GM12878 (cell line): ENCODE measurements at regions of chr4 and their contacts with region 1.

Region 1: GRCh38 chr4:25439918-25440477 is 62.9 kb downstream of the ANAPC4 start:
- DNase-seq: peak; percentile 11
- ATAC-seq: peak; percentile 97
- H3K4me3 ChIP-seq: no peak overlapping the region
- H3K27ac ChIP-seq: no peak overlapping the region
- H3K4me1 ChIP-seq: no peaks in the 10 kb centered on the region
- H3K27me3 ChIP-seq: no peaks in the 10 kb centered on the region; a peak in 1 of 4 replicates
- CTCF ChIP-seq: peak; percentile 85 to 90 (median 89)
- EP300 ChIP-seq: no peak
- POLR2A ChIP-seq: no peak
- RAD21 ChIP-seq: peak; percentile 75

Region 2: GRCh38 chr4:23877758-23878229 is 1562.2 kb before region 1 on chr4:
- CTCF ChIA-PET with region 1: no interaction called
- POLR2A ChIA-PET with region 1: no interaction called
- RAD21 ChIA-PET with region 1: no interaction called
- SMC1A ChIA-PET with region 1: no interaction called
- in situ Hi-C with region 1: no loop called
- intact Hi-C with region 1: no loop called
- DNase-seq: no peak
- ATAC-seq: no peak
- H3K4me3 ChIP-seq: no peak overlapping the region
- H3K27ac ChIP-seq: no peak overlapping the region
- H3K4me1 ChIP-seq: no peaks in the 10 kb centered on the region
- H3K27me3 ChIP-seq: no peaks in the 10 kb centered on the region
- CTCF ChIP-seq: no peak
- EP300 ChIP-seq: no peak
- POLR2A ChIP-seq: no peak
- RAD21 ChIP-seq: no peak

Region 3: GRCh38 chr4:25621027-25621930 is 181.3 kb after region 1 on chr4:
- CTCF ChIA-PET with region 1: no interaction called
- POLR2A ChIA-PET with region 1: no interaction called
- RAD21 ChIA-PET with region 1: no interaction called
- SMC1A ChIA-PET with region 1: interaction called, 3 read pairs
- in situ Hi-C with region 1: no loop called
- intact Hi-C with region 1: loop called (anchors 10 kb)
- DNase-seq: no peak
- ATAC-seq: no peak
- H3K4me3 ChIP-seq: no peak overlapping the region
- H3K27ac ChIP-seq: no peak overlapping the region
- H3K4me1 ChIP-seq: no peaks in the 10 kb centered on the region
- H3K27me3 ChIP-seq: no peaks in the 10 kb centered on the region; a peak in 1 of 4 replicates
- CTCF ChIP-seq: no peak
- EP300 ChIP-seq: no peak
- POLR2A ChIP-seq: no peak
- RAD21 ChIP-seq: no peak

Region 4: GRCh38 chr4:25767877-25768725 is 328.1 kb after region 1 on chr4:
- CTCF ChIA-PET with region 1: interaction called, 104 read pairs
- POLR2A ChIA-PET with region 1: no interaction called
- RAD21 ChIA-PET with region 1: interaction called, 22 read pairs
- SMC1A ChIA-PET with region 1: interaction called, 35 read pairs
- in situ Hi-C with region 1: no loop called
- intact Hi-C with region 1: loop called (anchors 1 kb)
- DNase-seq: no peak
- ATAC-seq: peak; percentile 88
- H3K4me3 ChIP-seq: no peak overlapping the region
- H3K27ac ChIP-seq: no peak overlapping the region
- H3K4me1 ChIP-seq: no peaks in the 10 kb centered on the region
- H3K27me3 ChIP-seq: no peaks in the 10 kb centered on the region
- CTCF ChIP-seq: peak; percentile 78 to 88 (median 86)
- EP300 ChIP-seq: no peak
- POLR2A ChIP-seq: no peak
- RAD21 ChIP-seq: peak; percentile 79

Region 5: GRCh38 chr4:25779016-25779415 is 339.0 kb after region 1 on chr4:
- CTCF ChIA-PET with region 1: interaction called, 4 read pairs
- POLR2A ChIA-PET with region 1: no interaction called
- RAD21 ChIA-PET with region 1: no interaction called
- SMC1A ChIA-PET with region 1: no interaction called
- in situ Hi-C with region 1: loop called (anchors 5 kb)
- intact Hi-C with region 1: no loop called
- DNase-seq: no peak
- ATAC-seq: no peak
- H3K4me3 ChIP-seq: no peak overlapping the region
- H3K27ac ChIP-seq: no peak overlapping the region
- H3K4me1 ChIP-seq: no peaks in the 10 kb centered on the region
- H3K27me3 ChIP-seq: no peaks in the 10 kb centered on the region
- CTCF ChIP-seq: no peak
- EP300 ChIP-seq: no peak
- POLR2A ChIP-seq: no peak
- RAD21 ChIP-seq: no peak